ENCODE measurements at regions of chr22 and their contacts with region 1.

Region 1: GRCh38 chr22:41448189-41448808 is 1.7 kb upstream of the TOB2 start:
- DNase-seq: peak; percentile 97
- ATAC-seq: peak; percentile 75
- H3K4me3 ChIP-seq: peak overlapping the region; percentile 82
- H3K27ac ChIP-seq: peak overlapping the region; percentile 92
- H3K4me1 ChIP-seq: peaks cover 4% of the 10 kb centered on the region; the same call in 1 of the 2 replicates
- H3K27me3 ChIP-seq: no peaks in the 10 kb centered on the region
- CTCF ChIP-seq: no peak

Region 2: DNA sequence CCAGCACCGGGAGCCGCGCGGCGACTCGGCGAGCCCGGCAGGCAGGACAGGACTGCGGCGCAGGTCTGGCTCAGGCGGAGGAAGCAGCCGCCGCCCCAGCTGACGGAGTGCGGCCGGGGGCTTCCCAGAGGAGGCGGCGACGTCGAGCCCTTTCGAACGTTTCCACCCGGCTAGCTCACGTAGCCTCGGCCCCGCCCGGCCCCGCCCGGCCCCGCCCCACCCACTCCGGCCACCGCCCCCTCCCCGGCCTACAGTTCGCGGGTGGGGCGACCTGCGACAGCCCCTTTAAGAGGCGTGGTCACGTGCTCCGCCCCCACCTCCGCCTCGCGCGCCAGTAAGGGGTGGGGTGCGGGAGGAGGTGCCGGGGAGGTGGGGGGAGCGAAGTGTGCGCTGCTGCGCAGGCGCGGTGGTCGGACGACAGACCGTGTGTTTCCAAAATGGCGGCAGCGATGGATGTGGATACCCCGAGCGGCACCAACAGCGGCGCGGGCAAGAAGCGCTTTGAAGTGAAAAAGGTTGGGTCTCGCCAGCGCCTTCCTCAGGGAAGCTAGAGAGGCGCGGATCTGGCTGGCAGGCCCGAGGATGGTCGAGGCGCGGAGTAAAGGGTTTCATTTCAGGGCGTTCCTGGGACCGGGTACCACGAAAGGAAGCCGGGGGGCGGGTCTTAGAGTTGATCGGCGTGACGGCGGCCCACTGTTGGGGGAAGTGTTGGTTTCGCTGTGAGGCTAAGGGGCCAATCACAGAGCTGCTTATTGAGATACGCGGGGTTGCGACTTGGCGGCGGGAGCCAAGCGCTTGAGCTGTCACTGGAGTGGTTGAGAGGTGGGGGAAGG is 497.1 kb before region 1 on chr22 and contains the start of gene RBX1:
- CTCF ChIA-PET with region 1: no interaction called
- POLR2A ChIA-PET with region 1: interaction called, 19 read pairs
- intact Hi-C with region 1: no loop called
- DNase-seq: peak; percentile 94
- ATAC-seq: peak; percentile 86
- H3K4me3 ChIP-seq: peak within 1 kb of the TSS; percentile 94
- H3K27ac ChIP-seq: peak within 1 kb of the TSS; percentile 75
- H3K4me1 ChIP-seq: no peaks in the 10 kb centered on the region
- H3K27me3 ChIP-seq: no peaks in the 10 kb centered on the region
- CTCF ChIP-seq: no peak
- total RNA-seq, gene RBX1: 55.0 TPM in 2 replicates

Region 3: DNA sequence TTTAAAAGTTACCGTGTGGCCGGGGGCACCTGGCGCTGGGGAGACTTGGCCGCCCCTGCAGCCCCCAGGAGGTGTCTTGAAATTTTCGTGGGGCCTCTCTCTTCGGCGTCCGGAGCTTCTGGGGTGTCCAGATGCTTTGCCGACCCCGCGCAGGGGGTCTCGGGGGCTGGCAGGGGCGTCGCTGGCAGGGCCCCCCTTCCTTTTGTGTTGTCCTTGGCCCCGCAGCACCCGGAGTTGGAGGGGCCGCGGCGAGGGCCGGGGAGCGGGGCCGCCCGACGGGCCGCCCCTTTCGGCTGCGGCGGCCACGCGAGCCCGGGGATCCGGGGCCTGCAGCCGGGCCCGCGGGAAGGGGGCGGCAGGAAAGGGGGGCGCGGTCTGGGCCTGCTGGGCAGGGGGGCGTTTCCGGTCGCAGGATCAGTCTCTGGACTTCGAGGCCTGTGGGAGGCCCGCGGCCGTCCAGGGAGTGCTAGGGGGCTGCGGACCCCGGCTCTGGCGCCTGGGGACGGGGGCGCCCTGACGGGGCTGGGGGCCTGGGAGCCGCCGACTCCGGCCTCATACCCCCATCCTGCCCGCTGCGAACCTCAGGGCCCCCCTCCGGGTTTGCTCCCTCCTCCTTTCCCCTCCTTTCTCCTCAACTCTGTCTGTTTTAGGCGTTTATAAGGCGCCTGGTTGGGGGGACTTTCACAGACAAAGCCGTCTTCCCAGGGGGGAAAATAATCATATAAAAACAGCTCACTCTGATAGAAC is 146.1 kb before region 1 on chr22:
- CTCF ChIA-PET with region 1: no interaction called
- POLR2A ChIA-PET with region 1: no interaction called
- intact Hi-C with region 1: no loop called
- DNase-seq: no peak
- ATAC-seq: no peak
- H3K4me3 ChIP-seq: peak overlapping the region; percentile 95
- H3K27ac ChIP-seq: peak overlapping the region; percentile 55
- H3K4me1 ChIP-seq: peaks cover 21% of the 10 kb centered on the region
- H3K27me3 ChIP-seq: no peaks in the 10 kb centered on the region
- CTCF ChIP-seq: no peak

Region 4: GRCh38 chr22:41403532-41404318 is 44.6 kb before region 1 on chr22:
- CTCF ChIA-PET with region 1: interaction called, 9 read pairs
- POLR2A ChIA-PET with region 1: interaction called, 14 read pairs
- intact Hi-C with region 1: no loop called
- DNase-seq: peak; percentile 88
- ATAC-seq: peak; percentile 94
- H3K4me3 ChIP-seq: no peak overlapping the region
- H3K27ac ChIP-seq: no peak overlapping the region
- H3K4me1 ChIP-seq: peaks cover 15% of the 10 kb centered on the region
- H3K27me3 ChIP-seq: no peaks in the 10 kb centered on the region
- CTCF ChIP-seq: peak; percentile 86

Region 5: GRCh38 chr22:41468381-41469217 is 20.3 kb after region 1 on chr22 and contains the starts of genes ACO2 and PHF5A:
- CTCF ChIA-PET with region 1: no interaction called
- POLR2A ChIA-PET with region 1: interaction called, 11 read pairs
- intact Hi-C with region 1: loop called (anchors 1 kb)
- DNase-seq: peak; percentile 95
- ATAC-seq: peak; percentile 94
- H3K4me3 ChIP-seq: peak within 1 kb of the TSS; percentile 95
- H3K27ac ChIP-seq: peak within 1 kb of the TSS; percentile 76
- H3K4me1 ChIP-seq: peaks cover 23% of the 10 kb centered on the region
- H3K27me3 ChIP-seq: no peaks in the 10 kb centered on the region
- CTCF ChIP-seq: no peak
- total RNA-seq, gene ACO2: 118 and 130 TPM in 2 replicates
- total RNA-seq, gene PHF5A: 76.5 and 80.4 TPM in 2 replicates

Region 6: DNA sequence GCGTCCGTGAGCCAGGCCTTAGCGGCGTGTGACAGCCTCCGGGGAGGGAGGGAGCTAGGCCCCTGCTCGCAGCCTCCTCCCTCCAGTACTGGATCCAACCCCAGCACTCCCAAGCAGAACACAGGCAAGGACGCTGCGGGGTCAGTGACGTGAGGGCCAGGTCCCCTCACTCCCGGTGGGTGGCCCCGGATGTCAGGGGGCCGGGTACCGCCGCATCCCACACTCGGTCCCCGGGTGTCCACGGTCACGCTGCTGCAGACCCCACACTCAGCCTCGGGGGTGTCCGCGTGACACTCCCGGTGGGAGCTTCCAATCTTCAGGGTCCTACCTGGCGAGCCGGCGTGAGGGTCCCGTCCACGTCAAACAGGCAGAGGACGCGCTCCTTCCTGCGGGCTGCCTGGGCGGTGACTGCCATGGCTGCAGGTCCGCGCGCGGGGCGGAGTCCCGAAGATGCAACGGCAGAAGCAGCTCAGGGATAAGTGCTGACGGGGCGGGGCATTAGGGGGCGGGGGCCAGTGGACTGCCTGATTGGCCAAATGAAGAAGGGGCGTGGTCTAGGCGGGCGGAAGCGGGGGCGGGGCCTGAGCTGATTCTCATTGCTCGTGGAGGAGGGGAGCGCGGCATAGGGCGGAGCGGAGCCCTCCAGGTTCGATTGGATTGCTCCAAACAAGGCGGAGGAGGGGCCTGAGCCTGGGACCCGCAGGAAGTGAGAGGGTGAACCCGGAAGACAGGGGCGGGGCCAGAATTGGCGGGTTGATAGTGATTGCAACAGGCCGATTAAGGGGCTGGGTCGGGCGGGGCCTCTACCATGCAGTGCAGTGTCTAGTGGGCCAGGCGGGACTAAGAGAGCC is 141.3 kb after region 1 on chr22 and contains the start of gene PMM1:
- CTCF ChIA-PET with region 1: no interaction called
- POLR2A ChIA-PET with region 1: interaction called, 17 read pairs
- intact Hi-C with region 1: no loop called
- DNase-seq: peak; percentile 98
- ATAC-seq: peak; percentile 94
- H3K4me3 ChIP-seq: peak within 1 kb of the TSS; percentile 94
- H3K27ac ChIP-seq: no peak within 1 kb of the TSS
- H3K4me1 ChIP-seq: peaks cover 17% of the 10 kb centered on the region
- H3K27me3 ChIP-seq: no peaks in the 10 kb centered on the region
- CTCF ChIP-seq: no peak
- total RNA-seq, gene PMM1: 18.0 and 18.6 TPM in 2 replicates

Region 7: DNA sequence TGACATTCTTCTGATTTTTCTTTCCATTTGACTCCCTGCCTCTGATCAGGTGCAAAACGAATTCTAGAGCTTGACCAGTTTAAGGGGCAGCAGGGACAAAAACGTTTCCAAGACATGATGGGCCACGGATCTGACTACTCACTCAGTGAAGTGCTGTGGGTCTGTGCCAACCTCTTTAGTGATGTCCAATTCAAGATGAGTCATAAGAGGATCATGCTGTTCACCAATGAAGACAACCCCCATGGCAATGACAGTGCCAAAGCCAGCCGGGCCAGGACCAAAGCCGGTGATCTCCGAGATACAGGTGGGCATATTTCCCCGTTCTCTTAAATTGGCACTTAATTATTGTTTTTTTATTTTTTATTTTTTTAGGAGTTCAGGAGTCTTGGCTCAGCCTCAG is 188.2 kb after region 1 on chr22:
- CTCF ChIA-PET with region 1: no interaction called
- POLR2A ChIA-PET with region 1: interaction called, 12 read pairs
- intact Hi-C with region 1: no loop called
- DNase-seq: peak; percentile 76
- ATAC-seq: peak; percentile 93
- H3K4me3 ChIP-seq: no peak overlapping the region
- H3K27ac ChIP-seq: peak overlapping the region; percentile 22; the same call in 1 of the 2 replicates
- H3K4me1 ChIP-seq: peaks cover 10% of the 10 kb centered on the region; the same call in 1 of the 2 replicates
- H3K27me3 ChIP-seq: no peaks in the 10 kb centered on the region
- CTCF ChIP-seq: no peak

Measured in PC-3 (cell line).